ENCODE measurements at regions of chr6 and their contacts with region 1.

Region 1: DNA sequence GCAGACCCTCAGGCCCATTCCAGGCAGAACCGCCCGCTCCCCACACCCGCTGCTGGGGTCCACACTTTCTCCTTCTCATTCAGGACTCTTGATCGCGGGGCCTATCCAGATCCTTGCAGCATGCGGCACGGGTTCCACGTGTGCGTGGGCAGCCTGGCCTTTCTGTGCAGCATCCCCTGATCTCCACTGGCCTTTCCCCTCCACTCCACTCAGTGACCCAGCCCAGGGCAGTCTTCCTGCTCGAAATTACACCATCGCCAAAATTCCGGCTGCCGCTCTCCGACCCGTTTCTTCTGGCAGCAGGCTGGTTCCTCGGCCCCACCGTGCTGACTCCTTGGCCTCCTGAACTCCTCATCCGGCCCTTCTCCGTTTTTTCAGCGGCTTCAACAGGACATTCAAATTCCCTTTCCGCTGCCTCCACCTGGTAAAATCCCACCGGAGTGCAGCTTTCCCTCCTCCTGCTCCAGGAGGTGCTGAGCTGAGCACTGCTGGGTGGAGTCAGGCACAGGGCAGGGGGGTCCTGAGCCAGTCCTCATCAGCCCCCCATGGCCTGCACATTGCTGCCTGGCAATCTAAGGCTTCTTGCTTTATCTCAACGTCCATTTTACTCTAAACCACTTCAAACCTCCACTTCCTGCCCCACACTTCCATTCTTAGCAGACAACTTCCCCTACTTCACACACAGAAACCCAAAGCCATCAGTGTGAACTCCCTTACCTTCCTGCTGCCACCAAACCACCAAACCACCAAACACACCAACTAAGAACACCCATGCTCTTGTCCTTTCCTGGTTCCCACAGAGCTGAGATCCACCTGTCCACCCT is 9.0 kb downstream of the SFT2D1 start:
- DNase-seq: no peak
- ATAC-seq: no peak
- H3K4me3 ChIP-seq: no peak overlapping the region
- H3K27ac ChIP-seq: no peak overlapping the region
- H3K4me1 ChIP-seq: peaks cover 36% of the 10 kb centered on the region
- H3K27me3 ChIP-seq: no peaks in the 10 kb centered on the region
- CTCF ChIP-seq: no peak
- EP300 ChIP-seq: no peak
- POLR2A ChIP-seq: no peak
- RAD21 ChIP-seq: no peak

Region 2: GRCh38 chr6:166360243-166361076 is 27.1 kb after region 1 on chr6:
- CTCF ChIA-PET with region 1: no interaction called
- POLR2A ChIA-PET with region 1: interaction called, 6 read pairs
- in situ Hi-C with region 1: no loop called
- intact Hi-C with region 1: loop called (anchors 1 kb)
- DNase-seq: no peak
- ATAC-seq: peak; percentile 76
- H3K4me3 ChIP-seq: peak overlapping the region; percentile 6 to 59 (median 32); a peak in 4 of 6 replicates
- H3K27ac ChIP-seq: peak overlapping the region; percentile 86
- H3K4me1 ChIP-seq: peaks cover 32% of the 10 kb centered on the region
- H3K27me3 ChIP-seq: no peaks in the 10 kb centered on the region
- CTCF ChIP-seq: no peak
- EP300 ChIP-seq: no peak
- POLR2A ChIP-seq: peak in 1 of 2 experiments; percentile 0; a peak in 1 of 4 replicates
- RAD21 ChIP-seq: no peak

Region 3: DNA sequence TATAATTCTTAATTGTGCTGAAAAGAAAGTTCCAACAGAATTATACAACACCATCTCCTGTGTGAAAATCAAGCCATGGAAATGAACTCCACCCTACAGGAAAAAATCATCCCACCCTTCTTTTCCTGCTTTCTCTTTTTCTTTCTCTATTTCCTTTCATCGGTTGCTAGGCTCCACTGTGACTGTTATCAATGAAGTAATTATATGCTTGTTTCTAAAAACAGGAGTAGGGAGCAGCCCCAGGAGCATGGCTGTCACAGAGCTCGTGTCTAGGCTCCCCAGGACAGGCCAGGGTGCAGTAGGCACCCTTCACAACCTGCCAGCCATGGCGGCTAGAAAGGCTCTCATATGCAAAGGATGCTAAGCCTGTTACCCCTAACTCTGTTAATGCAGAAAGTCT is 36.4 kb after region 1 on chr6:
- CTCF ChIA-PET with region 1: no interaction called
- POLR2A ChIA-PET with region 1: no interaction called
- in situ Hi-C with region 1: loop called (anchors 5 kb)
- intact Hi-C with region 1: no loop called
- DNase-seq: no peak
- ATAC-seq: no peak
- H3K4me3 ChIP-seq: no peak overlapping the region
- H3K27ac ChIP-seq: no peak overlapping the region
- H3K4me1 ChIP-seq: peaks cover 13% of the 10 kb centered on the region
- H3K27me3 ChIP-seq: no peaks in the 10 kb centered on the region
- CTCF ChIP-seq: no peak
- EP300 ChIP-seq: no peak
- POLR2A ChIP-seq: no peak
- RAD21 ChIP-seq: no peak

Region 4: GRCh38 chr6:166402582-166403277 is 69.3 kb after region 1 on chr6:
- CTCF ChIA-PET with region 1: interaction called, 3 read pairs
- POLR2A ChIA-PET with region 1: interaction called, 3 read pairs
- in situ Hi-C with region 1: no loop called
- intact Hi-C with region 1: loop called (anchors 1 kb)
- DNase-seq: no peak
- ATAC-seq: no peak
- H3K4me3 ChIP-seq: no peak overlapping the region
- H3K27ac ChIP-seq: no peak overlapping the region
- H3K4me1 ChIP-seq: peaks cover 52% of the 10 kb centered on the region
- H3K27me3 ChIP-seq: peaks cover 3 to 38% of the 10 kb centered on the region in 2 experiments
- CTCF ChIP-seq: no peak
- EP300 ChIP-seq: no peak
- POLR2A ChIP-seq: no peak
- RAD21 ChIP-seq: no peak